ENCODE measurements at regions of chr17 and their contacts with region 1.

Region 1: GRCh38 chr17:59440784-59441441 is 109.5 kb downstream of the YPEL2 start:
- DNase-seq: peak; percentile 78
- H3K4me3 ChIP-seq: no peak overlapping the region
- H3K27ac ChIP-seq: no peak overlapping the region
- H3K27me3 ChIP-seq: no peaks in the 10 kb centered on the region
- CTCF ChIP-seq: peak; percentile 90

Region 2: DNA sequence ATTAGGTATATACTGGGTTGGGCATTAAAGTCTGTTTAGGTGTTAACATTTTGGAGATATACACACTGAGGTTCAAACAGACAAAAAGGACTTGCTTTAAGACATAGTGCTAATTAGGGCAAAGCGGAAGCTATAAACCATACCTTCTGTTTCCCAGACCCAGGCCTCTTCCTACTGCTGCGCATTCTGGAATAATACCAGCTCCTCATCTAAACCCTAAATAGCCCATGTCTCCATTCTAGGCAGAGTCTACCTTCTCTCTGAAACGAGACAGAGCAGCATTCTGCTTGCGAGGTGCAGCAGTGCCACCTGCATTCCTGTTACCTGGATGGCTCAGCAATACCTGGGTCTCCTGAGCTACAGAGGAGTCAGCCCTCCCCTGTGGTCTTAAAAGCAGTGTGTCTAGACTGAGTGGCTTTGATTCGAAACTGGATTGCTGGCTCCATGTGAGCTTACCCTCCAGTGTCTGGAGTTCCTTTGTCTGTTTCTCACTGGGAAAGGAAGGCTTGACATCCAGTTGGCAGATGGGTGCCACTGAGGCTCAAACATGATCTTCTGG is 103.1 kb before region 1 on chr17:
- CTCF ChIA-PET with region 1: interaction called, 13 read pairs
- POLR2A ChIA-PET with region 1: interaction called, 6 read pairs
- DNase-seq: no peak
- H3K4me3 ChIP-seq: no peak overlapping the region
- H3K27ac ChIP-seq: no peak overlapping the region
- H3K27me3 ChIP-seq: peaks cover 37% of the 10 kb centered on the region
- CTCF ChIP-seq: no peak

Region 3: DNA sequence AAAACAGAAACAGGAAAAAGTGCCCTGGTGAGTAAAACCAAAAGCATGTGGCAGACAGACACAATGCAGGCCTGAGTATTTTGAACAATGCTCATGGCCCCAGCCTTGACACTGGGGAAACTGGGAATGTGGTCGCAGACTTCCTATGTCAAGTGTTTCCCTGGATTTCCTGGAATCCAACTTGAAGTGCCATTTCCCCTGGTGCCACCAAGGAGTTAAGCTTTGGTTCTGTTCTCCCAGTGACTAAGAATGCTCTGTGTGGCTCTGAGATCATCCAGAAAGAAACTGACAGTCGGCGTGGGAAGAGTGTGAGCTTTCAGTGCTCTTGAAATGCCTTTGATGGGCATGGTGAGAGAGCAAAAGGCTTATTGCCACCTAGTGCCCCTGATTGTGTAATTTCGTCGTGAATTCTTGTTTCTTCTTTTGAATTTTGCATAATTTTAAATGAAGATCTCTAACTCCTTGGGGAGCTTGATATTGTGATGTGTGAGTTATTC is 13.4 kb before region 1 on chr17:
- CTCF ChIA-PET with region 1: interaction called, 18 read pairs
- POLR2A ChIA-PET with region 1: no interaction called
- DNase-seq: no peak
- H3K4me3 ChIP-seq: no peak overlapping the region
- H3K27ac ChIP-seq: peak overlapping the region; percentile 59
- H3K27me3 ChIP-seq: no peaks in the 10 kb centered on the region
- CTCF ChIP-seq: no peak

Region 4: DNA sequence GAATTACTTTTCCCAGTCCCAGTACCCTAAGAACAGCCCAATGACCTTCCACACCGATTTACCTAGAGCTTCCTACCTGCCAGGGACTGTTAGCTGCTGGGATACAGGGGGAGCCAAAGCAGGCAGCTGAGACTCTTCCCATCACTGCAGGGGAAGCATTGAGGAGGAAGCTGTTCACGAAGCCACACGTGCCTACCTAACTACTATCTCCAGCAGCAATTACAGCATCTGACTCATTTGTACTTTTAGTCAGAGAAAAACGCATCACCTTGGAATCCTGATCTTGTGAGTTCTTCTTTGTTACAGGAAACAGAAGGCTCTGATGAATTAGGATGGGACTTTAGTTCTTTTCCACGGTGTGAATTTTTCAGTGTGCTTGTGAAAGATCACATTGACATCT is 10.8 kb after region 1 on chr17:
- CTCF ChIA-PET with region 1: interaction called, 16 read pairs
- POLR2A ChIA-PET with region 1: no interaction called
- DNase-seq: no peak
- H3K4me3 ChIP-seq: no peak overlapping the region
- H3K27ac ChIP-seq: no peak overlapping the region
- H3K27me3 ChIP-seq: no peaks in the 10 kb centered on the region
- CTCF ChIP-seq: no peak

Measured in AG04450 (cell line).